PC-9 (cell line): ENCODE measurements at regions of chr13 and their contacts with region 1.

Region 1: GRCh38 chr13:114151565-114152284 is 19.3 kb upstream of the RASA3 start:
- DNase-seq: peak; percentile 78 to 88
- H3K4me3 ChIP-seq: 0 out of 2 replicates have a peak overlapping the region, but pooled peaks have one; percentile 13
- H3K27ac ChIP-seq: peak overlapping the region; percentile 47; the same call in 1 of the 2 replicates
- H3K4me1 ChIP-seq: peaks cover 26% of the 10 kb centered on the region
- H3K27me3 ChIP-seq: no peaks in the 10 kb centered on the region
- CTCF ChIP-seq: peak; percentile 48; the same call in 1 of the 2 replicates

Region 2: GRCh38 chr13:114140131-114140905 is 11.4 kb before region 1 on chr13:
- CTCF ChIA-PET with region 1: no interaction called
- POLR2A ChIA-PET with region 1: interaction called, 13 read pairs
- intact Hi-C with region 1: no loop called
- DNase-seq: no peak
- H3K4me3 ChIP-seq: no peak overlapping the region
- H3K27ac ChIP-seq: no peak overlapping the region
- H3K4me1 ChIP-seq: no peaks in the 10 kb centered on the region
- H3K27me3 ChIP-seq: no peaks in the 10 kb centered on the region
- CTCF ChIP-seq: no peak

Region 3: GRCh38 chr13:114212158-114212495 is 60.4 kb after region 1 on chr13:
- CTCF ChIA-PET with region 1: no interaction called
- POLR2A ChIA-PET with region 1: no interaction called
- intact Hi-C with region 1: loop called (anchors 5 kb)
- DNase-seq: peak in 1 of 2 experiments; percentile 39
- H3K4me3 ChIP-seq: no peak overlapping the region
- H3K27ac ChIP-seq: no peak overlapping the region
- H3K4me1 ChIP-seq: no peaks in the 10 kb centered on the region
- H3K27me3 ChIP-seq: no peaks in the 10 kb centered on the region
- CTCF ChIP-seq: no peak